Ascending aorta (tissue), 2 donors: ENCODE measurements at regions of chr15 and their contacts with region 1.

Region 1: GRCh38 chr15:62606376-62607113 is 436.0 kb upstream of the TPM1 start:
- DNase-seq: no peak
- H3K4me3 ChIP-seq: no peak overlapping the region
- H3K27ac ChIP-seq: peak overlapping the region in 1 of 2 donors; percentile 20
- H3K4me1 ChIP-seq: peaks cover 0 to 19% of the 10 kb centered on the region in 2 donors
- H3K27me3 ChIP-seq: no peaks in the 10 kb centered on the region
- CTCF ChIP-seq: no peak

Region 2: DNA sequence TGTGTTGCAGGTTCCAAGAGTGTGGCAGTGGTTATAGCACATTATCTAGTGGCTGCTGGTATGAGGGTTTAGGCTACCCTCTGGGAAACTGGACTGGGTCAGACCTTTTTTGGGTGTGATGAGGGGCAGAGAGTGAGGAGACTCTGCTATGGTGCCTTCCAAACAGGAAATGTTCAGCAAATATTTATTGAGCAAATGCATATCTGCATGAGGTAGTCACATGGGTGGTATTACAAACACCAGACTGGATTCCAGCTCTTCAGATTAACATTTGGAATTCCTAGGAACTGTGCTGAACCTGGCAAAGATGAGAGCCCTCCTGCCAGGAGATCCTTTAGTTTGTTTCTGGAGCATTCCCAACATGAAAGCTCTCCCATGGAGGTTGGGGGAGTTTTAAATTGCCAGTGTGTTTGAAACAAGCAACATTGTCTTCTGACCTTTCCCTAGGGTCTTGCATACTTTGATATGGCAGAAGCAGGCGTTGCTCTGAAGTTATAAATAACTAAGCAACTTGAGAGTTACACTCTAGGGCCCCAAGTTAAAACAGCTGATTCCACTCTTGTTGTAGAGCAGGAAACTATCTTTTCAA is 100.2 kb before region 1 on chr15:
- intact Hi-C with region 1: loop called (anchors 5 kb)
- DNase-seq: no peak
- H3K4me3 ChIP-seq: peak overlapping the region in 1 of 2 donors; percentile 30
- H3K27ac ChIP-seq: peak overlapping the region; percentile 84 to 88
- H3K4me1 ChIP-seq: peaks cover 11 to 44% of the 10 kb centered on the region in 2 donors
- H3K27me3 ChIP-seq: no peaks in the 10 kb centered on the region
- CTCF ChIP-seq: no peak